Tibial artery (tissue), 4 donors: ENCODE measurements at regions of chr15 and their contacts with region 1.

Region 1: GRCh38 chr15:80776420-80777045 is 2.6 kb upstream of the CEMIP start:
- DNase-seq: peak; percentile 58 to 76
- H3K4me3 ChIP-seq: no peak overlapping the region
- H3K27ac ChIP-seq: no peak overlapping the region
- H3K4me1 ChIP-seq: peaks cover 0 to 34% (median 23%) of the 10 kb centered on the region in 4 donors
- H3K27me3 ChIP-seq: peaks cover 0 to 40% of the 10 kb centered on the region in 2 donors
- CTCF ChIP-seq: peak; percentile 71 to 75

Region 2: GRCh38 chr15:80455668-80456442 is 320.7 kb before region 1 on chr15:
- intact Hi-C with region 1: loop called (anchors 2 kb)
- DNase-seq: peak in 1 of 2 donors; percentile 40
- H3K4me3 ChIP-seq: no peak overlapping the region
- H3K27ac ChIP-seq: no peak overlapping the region
- H3K4me1 ChIP-seq: peaks cover 0 to 11% (median 3%) of the 10 kb centered on the region in 4 donors
- H3K27me3 ChIP-seq: no peaks in the 10 kb centered on the region
- CTCF ChIP-seq: peak; percentile 92 to 95

Region 3: DNA sequence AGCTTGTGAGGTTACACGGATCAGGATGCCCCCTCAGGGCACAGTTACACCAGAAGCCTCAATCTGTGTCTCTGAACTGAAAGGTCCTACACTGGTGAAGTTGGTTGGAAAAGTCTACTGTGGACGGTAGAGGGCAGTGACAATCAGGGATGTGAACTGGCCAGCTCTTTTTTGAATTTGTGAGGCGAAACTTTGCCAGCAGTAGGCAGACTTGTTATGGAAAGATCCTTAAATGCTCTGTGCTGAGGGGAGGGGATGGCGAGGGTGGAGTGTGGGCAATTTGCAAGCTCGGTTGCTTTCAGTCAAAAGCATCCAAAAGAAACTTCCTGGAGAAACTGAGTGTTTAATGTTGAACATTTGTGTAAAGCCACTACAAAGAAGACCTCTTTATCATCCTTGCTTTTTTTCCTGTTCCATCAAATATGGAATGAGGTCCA is 208.8 kb before region 1 on chr15:
- intact Hi-C with region 1: loop called (anchors 5 kb)
- DNase-seq: peak in 1 of 2 donors; percentile 56
- H3K4me3 ChIP-seq: no peak overlapping the region
- H3K27ac ChIP-seq: no peak overlapping the region
- H3K4me1 ChIP-seq: peaks cover 0 to 5% (median 0%) of the 10 kb centered on the region in 4 donors
- H3K27me3 ChIP-seq: no peaks in the 10 kb centered on the region
- CTCF ChIP-seq: peak; percentile 61 to 66

Region 4: GRCh38 chr15:80619680-80620079 is 156.9 kb before region 1 on chr15:
- intact Hi-C with region 1: loop called (anchors 1 kb)
- DNase-seq: no peak
- H3K4me3 ChIP-seq: no peak overlapping the region
- H3K27ac ChIP-seq: no peak overlapping the region
- H3K4me1 ChIP-seq: peaks cover 0 to 11% (median 0%) of the 10 kb centered on the region in 4 donors
- H3K27me3 ChIP-seq: no peaks in the 10 kb centered on the region
- CTCF ChIP-seq: peak; percentile 12 to 18

Region 5: GRCh38 chr15:80695104-80695910 is 81.2 kb before region 1 on chr15 and contains the start of gene ABHD17C:
- intact Hi-C with region 1: loop called (anchors 5 kb)
- DNase-seq: peak; percentile 46 to 75
- H3K4me3 ChIP-seq: peak within 1 kb of the TSS; percentile 77 to 87
- H3K27ac ChIP-seq: peak within 1 kb of the TSS; percentile 89
- H3K4me1 ChIP-seq: peaks cover 0 to 19% (median 16%) of the 10 kb centered on the region in 4 donors
- H3K27me3 ChIP-seq: no peaks in the 10 kb centered on the region
- CTCF ChIP-seq: no peak

Region 6: DNA sequence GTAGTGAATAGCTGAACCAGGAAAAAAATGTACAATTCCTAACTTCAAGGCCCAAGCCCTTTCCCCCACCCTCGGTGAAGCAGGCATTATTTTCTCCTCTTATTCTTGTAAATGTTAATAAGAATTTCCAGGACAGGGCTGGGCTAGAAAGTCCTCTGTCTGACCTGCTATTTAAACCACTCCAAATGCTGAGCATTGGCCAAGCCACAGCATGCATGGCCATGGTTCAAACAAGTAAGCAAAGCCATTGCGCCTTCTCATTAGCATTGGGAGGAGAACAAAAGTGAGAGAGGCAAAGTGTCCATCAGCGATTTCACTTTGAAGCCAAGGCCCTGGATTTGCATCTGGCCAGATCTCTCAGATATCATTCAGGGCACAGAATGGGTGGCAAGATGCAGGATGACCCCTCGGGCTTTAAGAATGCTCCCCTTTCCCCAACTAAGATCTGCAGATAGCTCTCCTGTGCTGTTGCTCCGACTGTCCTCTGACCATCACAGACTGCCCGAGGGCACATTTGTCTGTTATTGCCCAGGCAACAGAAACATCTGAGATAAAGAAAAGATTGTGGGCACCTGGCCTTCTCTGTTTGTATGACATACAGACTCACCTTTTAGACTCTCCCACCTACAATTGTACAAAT is 49.0 kb after region 1 on chr15:
- intact Hi-C with region 1: no loop called
- DNase-seq: no peak
- H3K4me3 ChIP-seq: no peak overlapping the region
- H3K27ac ChIP-seq: no peak overlapping the region
- H3K4me1 ChIP-seq: peaks cover 0 to 7% (median 0%) of the 10 kb centered on the region in 4 donors
- H3K27me3 ChIP-seq: no peaks in the 10 kb centered on the region
- CTCF ChIP-seq: no peak